ENCODE measurements at regions of chr7 and their contacts with region 1.

Region 1: GRCh38 chr7:50467817-50468610 is 17.9 kb upstream of the FIGNL1 start:
- DNase-seq: peak; percentile 93
- H3K4me3 ChIP-seq: peak overlapping the region in 1 of 2 experiments; percentile 17; a peak in 1 of 4 replicates
- H3K27ac ChIP-seq: peak overlapping the region in 1 of 2 experiments; percentile 88; a peak in 2 of 4 replicates
- H3K4me1 ChIP-seq: peaks cover 0 to 44% of the 10 kb centered on the region in 2 experiments; a peak in 1 of 4 replicates
- H3K27me3 ChIP-seq: peaks cover 3% of the 10 kb centered on the region; the same call in 1 of the 2 replicates
- CTCF ChIP-seq: peak; percentile 98
- EP300 ChIP-seq: no peak; a peak in 1 of 4 replicates
- RAD21 ChIP-seq: peak; percentile 99

Region 2: DNA sequence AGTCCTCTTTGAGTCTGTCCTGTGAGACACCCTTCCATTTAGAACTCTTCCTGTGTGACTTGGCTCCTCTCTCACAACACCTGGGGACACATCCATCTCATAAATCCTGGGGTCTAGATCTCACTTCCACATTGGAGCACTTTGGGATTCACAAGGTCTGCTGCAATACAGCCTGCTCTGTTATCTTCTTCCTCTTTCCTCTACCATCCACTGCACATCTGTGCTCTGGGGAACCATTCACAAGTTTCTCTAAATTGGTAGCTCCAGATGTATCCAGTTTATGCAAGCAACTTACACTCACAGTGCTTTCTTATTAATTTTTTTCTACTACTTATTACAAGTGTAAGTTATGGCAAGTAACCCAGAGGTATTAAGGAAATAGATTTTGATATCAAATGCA is 12.4 kb before region 1 on chr7:
- CTCF ChIA-PET with region 1: interaction called, 19 read pairs
- POLR2A ChIA-PET with region 1: no interaction called
- DNase-seq: no peak
- H3K4me3 ChIP-seq: no peak overlapping the region
- H3K27ac ChIP-seq: peak overlapping the region in 1 of 2 experiments; percentile 11; a peak in 1 of 4 replicates
- H3K4me1 ChIP-seq: peaks cover 0 to 19% of the 10 kb centered on the region in 2 experiments; a peak in 1 of 4 replicates
- H3K27me3 ChIP-seq: peaks cover 12% of the 10 kb centered on the region
- CTCF ChIP-seq: no peak
- EP300 ChIP-seq: no peak
- RAD21 ChIP-seq: no peak

Region 3: GRCh38 chr7:50502001-50502684 is 34.1 kb after region 1 on chr7:
- CTCF ChIA-PET with region 1: interaction called, 51 read pairs
- POLR2A ChIA-PET with region 1: interaction called, 18 read pairs
- DNase-seq: no peak
- H3K4me3 ChIP-seq: no peak overlapping the region
- H3K27ac ChIP-seq: peak overlapping the region in 1 of 2 experiments; percentile 100; a peak in 2 of 4 replicates
- H3K4me1 ChIP-seq: peaks cover 0 to 84% of the 10 kb centered on the region in 2 experiments; a peak in 2 of 4 replicates
- H3K27me3 ChIP-seq: peaks cover 11% of the 10 kb centered on the region; the same call in 1 of the 2 replicates
- CTCF ChIP-seq: no peak
- EP300 ChIP-seq: peak in 1 of 2 experiments; percentile 20; a peak in 1 of 4 replicates
- RAD21 ChIP-seq: no peak

Region 4: GRCh38 chr7:50534690-50535290 is 66.8 kb after region 1 on chr7:
- CTCF ChIA-PET with region 1: interaction called, 59 read pairs
- POLR2A ChIA-PET with region 1: interaction called, 19 read pairs
- DNase-seq: peak; percentile 67
- H3K4me3 ChIP-seq: no peak overlapping the region
- H3K27ac ChIP-seq: peak overlapping the region; percentile 85 to 99
- H3K4me1 ChIP-seq: peaks cover 8 to 75% of the 10 kb centered on the region in 2 experiments; a peak in 3 of 4 replicates
- H3K27me3 ChIP-seq: 0 out of 2 replicates have a peak, but pooled peaks cover 7% of the 10 kb centered on the region
- CTCF ChIP-seq: peak; percentile 43
- EP300 ChIP-seq: peak; percentile 54 to 67; a peak in 2 of 4 replicates
- RAD21 ChIP-seq: peak; percentile 53

Region 5: DNA sequence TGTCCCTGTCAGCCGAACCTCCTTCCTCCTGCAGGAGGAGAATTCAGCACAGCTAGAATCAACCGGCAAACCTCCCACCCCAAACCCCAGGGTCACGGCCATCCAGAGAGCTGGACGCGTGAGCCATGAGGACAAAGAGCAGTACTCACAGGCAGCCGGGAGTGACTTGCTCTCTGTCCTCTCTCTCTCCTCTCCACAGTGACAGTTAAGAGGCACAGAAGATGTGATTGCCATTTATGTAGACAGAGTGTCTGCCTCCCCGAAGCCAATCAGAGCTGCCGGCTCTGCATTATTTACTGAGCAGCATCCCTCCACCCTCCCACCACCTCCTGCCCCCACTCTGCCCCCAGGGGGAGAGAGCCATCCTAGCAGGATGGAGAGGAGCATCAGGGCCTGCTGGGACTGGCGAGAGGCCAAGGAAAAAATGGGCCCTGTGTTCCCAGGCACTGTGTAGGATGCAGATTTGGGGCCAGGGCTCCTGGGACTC is 92.9 kb after region 1 on chr7:
- CTCF ChIA-PET with region 1: interaction called, 43 read pairs
- POLR2A ChIA-PET with region 1: interaction called, 28 read pairs
- DNase-seq: peak; percentile 91
- H3K4me3 ChIP-seq: peak overlapping the region; percentile 28 to 55; a peak in 3 of 4 replicates
- H3K27ac ChIP-seq: peak overlapping the region in 1 of 2 experiments; percentile 99; a peak in 2 of 4 replicates
- H3K4me1 ChIP-seq: peaks cover 0 to 66% of the 10 kb centered on the region in 2 experiments; a peak in 2 of 4 replicates
- H3K27me3 ChIP-seq: peaks cover 60% of the 10 kb centered on the region
- CTCF ChIP-seq: no peak
- EP300 ChIP-seq: peak in 1 of 2 experiments; percentile 85; a peak in 2 of 4 replicates
- RAD21 ChIP-seq: peak; percentile 25

Region 6: DNA sequence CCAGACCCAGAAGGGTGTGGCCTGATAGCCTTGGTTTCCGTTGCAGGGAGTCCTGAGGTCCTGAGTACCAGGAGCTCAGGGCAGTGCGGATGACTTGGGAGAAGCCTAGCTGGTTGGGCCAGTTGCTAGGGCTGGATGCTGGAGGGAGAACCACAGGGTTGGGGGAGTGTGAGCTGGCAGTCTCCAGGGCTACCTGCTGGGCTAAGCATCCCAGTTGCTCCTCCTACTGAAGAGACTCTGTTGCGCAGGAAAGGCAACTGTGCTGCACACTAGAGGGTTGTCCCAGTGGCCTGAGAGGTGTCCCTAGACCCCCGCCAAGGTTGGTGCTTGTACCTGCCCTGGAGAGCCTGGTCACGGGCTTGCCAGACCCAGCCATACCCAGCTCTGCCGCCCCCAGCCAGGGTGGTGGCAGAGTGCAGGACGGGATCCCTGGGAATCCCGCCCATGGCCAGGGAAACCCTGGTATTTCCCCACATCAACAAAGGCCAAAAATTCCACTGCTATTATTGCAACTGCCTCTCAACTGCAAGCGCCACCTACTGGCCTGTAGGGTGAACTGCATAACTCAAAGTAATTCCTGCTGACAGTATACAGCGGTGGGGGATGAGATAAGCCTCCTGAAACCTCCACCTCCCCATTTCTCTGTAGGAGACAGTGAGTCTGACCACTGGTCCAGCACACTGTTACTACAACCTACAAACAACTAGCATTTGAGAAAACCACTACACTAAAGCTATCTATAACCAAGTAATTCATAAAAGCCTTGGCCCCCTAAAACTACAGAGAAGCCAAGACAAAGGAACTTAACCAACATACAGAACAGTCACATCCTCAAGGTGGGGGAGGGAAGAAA is 164.8 kb after region 1 on chr7:
- CTCF ChIA-PET with region 1: interaction called, 81 read pairs
- POLR2A ChIA-PET with region 1: interaction called, 4 read pairs
- DNase-seq: peak; percentile 74
- H3K4me3 ChIP-seq: no peak overlapping the region; a peak in 1 of 4 replicates
- H3K27ac ChIP-seq: no peak overlapping the region; a peak in 1 of 4 replicates
- H3K4me1 ChIP-seq: peaks cover 0 to 15% of the 10 kb centered on the region in 2 experiments; a peak in 1 of 4 replicates
- H3K27me3 ChIP-seq: no peaks in the 10 kb centered on the region
- CTCF ChIP-seq: peak; percentile 98
- EP300 ChIP-seq: no peak
- RAD21 ChIP-seq: peak; percentile 78